ENCODE measurements at regions of chr12 and their contacts with region 1.

Region 1: GRCh38 chr12:100573292-100574186 is at the start of gene GAS2L3:
- DNase-seq: peak; percentile 91
- H3K4me3 Mint-ChIP-seq: peak within 1 kb of the TSS; percentile 92
- H3K27ac Mint-ChIP-seq: peak within 1 kb of the TSS; percentile 88
- H3K4me1 Mint-ChIP-seq: peaks cover 6% of the 10 kb centered on the region
- H3K27me3 Mint-ChIP-seq: no peaks in the 10 kb centered on the region
- CTCF ChIP-seq: no peak
- total RNA-seq, gene GAS2L3: 29.9 and 32.6 TPM in 2 replicates

Region 2: DNA sequence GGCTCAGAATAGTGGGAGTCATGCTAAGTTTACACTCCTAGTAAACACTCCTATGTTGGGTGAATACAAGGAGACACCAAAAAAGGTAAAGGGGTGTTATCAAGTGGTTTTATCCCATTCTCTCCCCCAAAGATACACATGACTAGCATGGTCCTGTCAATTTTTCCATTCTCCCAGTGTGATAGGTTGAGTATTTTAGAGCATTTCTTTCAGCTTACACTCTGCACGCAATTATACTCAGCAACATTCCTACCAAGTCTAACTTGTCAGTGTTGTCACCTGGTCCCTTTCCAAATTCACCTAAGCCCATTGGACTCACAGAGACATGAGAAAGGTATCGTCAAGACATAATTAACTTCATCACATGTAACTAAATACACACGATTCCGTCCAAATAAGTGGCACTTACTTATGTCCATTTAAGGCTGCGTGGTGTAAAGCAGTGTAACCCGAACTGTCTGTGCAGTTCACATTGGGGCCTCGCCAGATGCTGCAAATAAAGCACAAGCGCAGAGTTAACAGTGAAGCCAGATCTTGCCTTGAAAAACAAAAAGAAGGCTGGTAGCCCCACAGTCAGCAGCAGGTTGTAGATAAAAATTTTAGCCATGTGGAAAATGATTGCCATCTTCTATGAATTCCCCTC is 748.5 kb before region 1 on chr12:
- CTCF ChIA-PET with region 1: no interaction called
- POLR2A ChIA-PET with region 1: no interaction called
- intact Hi-C with region 1: no loop called
- DNase-seq: no peak
- H3K4me3 Mint-ChIP-seq: no peak overlapping the region
- H3K27ac Mint-ChIP-seq: no peak overlapping the region
- H3K4me1 Mint-ChIP-seq: no peaks in the 10 kb centered on the region
- H3K27me3 Mint-ChIP-seq: no peaks in the 10 kb centered on the region
- CTCF ChIP-seq: no peak

Region 3: DNA sequence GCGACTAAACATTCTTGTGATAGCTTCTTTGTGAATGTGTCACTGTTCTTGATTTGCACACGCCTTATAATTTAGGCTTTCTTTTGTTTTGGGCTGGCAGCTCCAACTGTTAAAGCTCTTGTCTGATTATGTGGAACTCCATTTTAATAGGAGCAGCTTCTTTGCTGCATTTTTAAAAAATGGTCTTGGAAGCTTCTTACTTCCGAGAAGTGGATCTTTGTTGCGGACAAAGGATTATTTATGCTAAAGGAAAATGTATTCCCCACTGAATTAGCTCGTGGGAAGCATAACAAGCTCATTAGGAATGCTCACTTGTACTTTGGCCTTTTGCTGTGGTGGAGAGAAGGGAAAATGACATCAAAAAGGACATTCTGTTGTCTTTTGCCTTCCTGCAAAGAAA is 20.0 kb after region 1 on chr12:
- CTCF ChIA-PET with region 1: interaction called, 5 read pairs
- POLR2A ChIA-PET with region 1: interaction called, 16 read pairs
- intact Hi-C with region 1: no loop called
- DNase-seq: peak; percentile 6
- H3K4me3 Mint-ChIP-seq: peak overlapping the region; percentile 68
- H3K27ac Mint-ChIP-seq: peak overlapping the region; percentile 80
- H3K4me1 Mint-ChIP-seq: peaks cover 20% of the 10 kb centered on the region
- H3K27me3 Mint-ChIP-seq: no peaks in the 10 kb centered on the region
- CTCF ChIP-seq: no peak

Region 4: GRCh38 chr12:100706033-100706432 is 132.5 kb after region 1 on chr12:
- CTCF ChIA-PET with region 1: no interaction called
- POLR2A ChIA-PET with region 1: interaction called, 4 read pairs
- intact Hi-C with region 1: loop called (anchors 1 kb)
- DNase-seq: peak; percentile 65
- H3K4me3 Mint-ChIP-seq: no peak overlapping the region
- H3K27ac Mint-ChIP-seq: peak overlapping the region; percentile 85
- H3K4me1 Mint-ChIP-seq: peaks cover 12% of the 10 kb centered on the region
- H3K27me3 Mint-ChIP-seq: no peaks in the 10 kb centered on the region
- CTCF ChIP-seq: no peak

Measured in MCF 10A (cell line).